A549 (cell line): ENCODE measurements at regions of chr12 and their contacts with region 1.

Region 1: GRCh38 chr12:27969624-27970400 is 2.7 kb downstream of the PTHLH start:
- DNase-seq: peak; percentile 47 to 90
- ATAC-seq: peak; percentile 79 to 80
- H3K4me3 ChIP-seq: peak overlapping the region; percentile 64
- H3K27ac ChIP-seq: peak overlapping the region; percentile 82 to 95
- H3K4me1 ChIP-seq: peaks cover 83% of the 10 kb centered on the region
- CTCF ChIP-seq: peak; percentile 65
- EP300 ChIP-seq: no peak
- POLR2A ChIP-seq: peak; percentile 41
- RAD21 ChIP-seq: peak; percentile 73 to 75

Region 2: GRCh38 chr12:27984275-27984674 is 14.5 kb after region 1 on chr12:
- CTCF ChIA-PET with region 1: interaction called, 17 read pairs
- POLR2A ChIA-PET with region 1: interaction called, 25 read pairs
- DNase-seq: peak; percentile 60 to 88
- ATAC-seq: peak; percentile 95 to 98
- H3K4me3 ChIP-seq: no peak overlapping the region
- H3K27ac ChIP-seq: peak overlapping the region; percentile 74 to 84
- H3K4me1 ChIP-seq: peaks cover 38% of the 10 kb centered on the region
- CTCF ChIP-seq: no peak
- EP300 ChIP-seq: peak; percentile 36 to 53; a peak in 2 of 5 replicates
- POLR2A ChIP-seq: no peak
- RAD21 ChIP-seq: peak in 1 of 2 experiments; percentile 30; a peak in 2 of 5 replicates

Region 3: GRCh38 chr12:28130625-28131598 is 161.1 kb after region 1 on chr12:
- CTCF ChIA-PET with region 1: interaction called, 5 read pairs
- POLR2A ChIA-PET with region 1: interaction called, 11 read pairs
- DNase-seq: peak; percentile 27 to 91
- ATAC-seq: peak; percentile 99 to 100
- H3K4me3 ChIP-seq: no peak overlapping the region
- H3K27ac ChIP-seq: peak overlapping the region; percentile 54 to 82
- H3K4me1 ChIP-seq: peaks cover 23% of the 10 kb centered on the region
- CTCF ChIP-seq: no peak
- EP300 ChIP-seq: peak in 1 of 2 experiments; percentile 19; a peak in 1 of 5 replicates
- POLR2A ChIP-seq: no peak
- RAD21 ChIP-seq: peak in 1 of 2 experiments; percentile 25; a peak in 1 of 5 replicates

Region 4: DNA sequence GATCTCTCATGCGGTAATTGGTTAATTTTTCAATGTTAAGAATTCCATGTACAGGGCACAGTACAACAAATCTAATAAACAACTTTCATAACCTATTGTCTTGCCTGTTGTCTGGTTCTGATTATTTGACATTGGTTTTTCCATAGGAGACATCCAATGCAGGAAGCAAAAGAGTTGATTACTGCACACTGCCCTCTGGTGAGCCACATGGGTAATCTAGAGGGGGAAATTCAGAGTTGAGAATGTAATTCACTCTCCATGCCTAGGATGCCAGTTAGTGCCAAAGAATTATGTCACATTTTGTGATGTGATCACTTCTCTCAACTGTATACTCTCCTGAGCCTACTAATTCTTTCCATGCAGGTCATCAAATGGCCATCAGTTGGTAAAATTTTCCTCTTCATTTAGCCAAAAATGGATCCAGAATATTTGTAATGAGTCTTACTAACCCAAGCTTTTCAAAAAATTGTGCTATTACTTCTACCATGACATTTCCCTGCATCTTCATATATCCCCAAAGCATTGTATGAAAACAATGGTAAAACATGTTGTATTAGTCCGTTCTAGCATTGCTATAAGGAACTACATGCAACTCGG is 202.7 kb after region 1 on chr12:
- CTCF ChIA-PET with region 1: interaction called, 41 read pairs
- POLR2A ChIA-PET with region 1: interaction called, 7 read pairs
- DNase-seq: peak; percentile 50 to 73
- ATAC-seq: peak; percentile 86 to 93
- H3K4me3 ChIP-seq: no peak overlapping the region
- H3K27ac ChIP-seq: no peak overlapping the region
- H3K4me1 ChIP-seq: 0 out of 3 replicates have a peak, but pooled peaks cover 2% of the 10 kb centered on the region
- CTCF ChIP-seq: peak; percentile 81
- EP300 ChIP-seq: no peak
- POLR2A ChIP-seq: no peak
- RAD21 ChIP-seq: peak; percentile 92 to 95

Region 5: GRCh38 chr12:28872654-28873268 is 902.9 kb after region 1 on chr12:
- CTCF ChIA-PET with region 1: interaction called, 10 read pairs
- POLR2A ChIA-PET with region 1: interaction called, 4 read pairs
- DNase-seq: peak; percentile 48 to 69
- ATAC-seq: peak; percentile 84 to 93; a peak in 5 of 6 replicates
- H3K4me3 ChIP-seq: no peak overlapping the region
- H3K27ac ChIP-seq: no peak overlapping the region
- H3K4me1 ChIP-seq: peaks cover 7% of the 10 kb centered on the region; the same call in 1 of the 3 replicates
- CTCF ChIP-seq: peak; percentile 71
- EP300 ChIP-seq: no peak
- POLR2A ChIP-seq: no peak
- RAD21 ChIP-seq: peak; percentile 89 to 90